WTC11 (cell line): ENCODE measurements at regions of chr19 and their contacts with region 1.

Region 1: DNA sequence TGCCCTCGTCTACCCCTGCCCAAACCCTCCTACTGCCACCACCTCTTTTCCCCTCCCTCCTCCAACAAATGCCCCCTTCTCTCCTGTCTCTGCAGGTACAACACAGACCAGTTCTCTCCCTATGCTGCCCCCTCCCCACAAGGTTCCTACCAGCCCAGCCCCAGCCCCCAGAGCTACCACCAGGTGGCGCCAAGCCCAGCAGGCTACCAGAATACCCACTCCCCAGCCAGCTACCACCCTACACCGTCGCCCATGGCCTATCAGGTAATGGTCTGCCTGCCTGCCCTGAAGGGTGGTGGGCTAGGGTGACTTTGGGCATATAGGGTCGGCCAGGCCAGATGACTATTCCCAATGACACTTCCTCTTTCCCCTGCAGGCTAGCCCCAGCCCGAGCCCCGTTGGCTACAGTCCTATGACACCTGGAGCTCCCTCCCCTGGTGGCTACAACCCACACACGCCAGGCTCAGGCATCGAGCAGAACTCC is 6.5 kb upstream of the TIMM50 start:
- DNase-seq: peak; percentile 90
- ATAC-seq: peak; percentile 90
- H3K4me3 Mint-ChIP-seq: no peak overlapping the region
- H3K27ac Mint-ChIP-seq: peak overlapping the region; percentile 56; the same call in 1 of the 2 replicates
- H3K4me1 Mint-ChIP-seq: peaks cover 3% of the 10 kb centered on the region; the same call in 1 of the 2 replicates
- H3K27me3 Mint-ChIP-seq: no peaks in the 10 kb centered on the region
- CTCF ChIP-seq: peak; percentile 93

Region 2: GRCh38 chr19:39397360-39398296 is 76.6 kb before region 1 on chr19:
- CTCF ChIA-PET with region 1: interaction called, 12 read pairs
- POLR2A ChIA-PET with region 1: no interaction called
- DNase-seq: peak; percentile 94
- ATAC-seq: peak; percentile 88
- H3K4me3 Mint-ChIP-seq: no peak overlapping the region
- H3K27ac Mint-ChIP-seq: peak overlapping the region; percentile 54
- H3K4me1 Mint-ChIP-seq: peaks cover 25% of the 10 kb centered on the region
- H3K27me3 Mint-ChIP-seq: no peaks in the 10 kb centered on the region
- CTCF ChIP-seq: peak; percentile 93

Region 3: DNA sequence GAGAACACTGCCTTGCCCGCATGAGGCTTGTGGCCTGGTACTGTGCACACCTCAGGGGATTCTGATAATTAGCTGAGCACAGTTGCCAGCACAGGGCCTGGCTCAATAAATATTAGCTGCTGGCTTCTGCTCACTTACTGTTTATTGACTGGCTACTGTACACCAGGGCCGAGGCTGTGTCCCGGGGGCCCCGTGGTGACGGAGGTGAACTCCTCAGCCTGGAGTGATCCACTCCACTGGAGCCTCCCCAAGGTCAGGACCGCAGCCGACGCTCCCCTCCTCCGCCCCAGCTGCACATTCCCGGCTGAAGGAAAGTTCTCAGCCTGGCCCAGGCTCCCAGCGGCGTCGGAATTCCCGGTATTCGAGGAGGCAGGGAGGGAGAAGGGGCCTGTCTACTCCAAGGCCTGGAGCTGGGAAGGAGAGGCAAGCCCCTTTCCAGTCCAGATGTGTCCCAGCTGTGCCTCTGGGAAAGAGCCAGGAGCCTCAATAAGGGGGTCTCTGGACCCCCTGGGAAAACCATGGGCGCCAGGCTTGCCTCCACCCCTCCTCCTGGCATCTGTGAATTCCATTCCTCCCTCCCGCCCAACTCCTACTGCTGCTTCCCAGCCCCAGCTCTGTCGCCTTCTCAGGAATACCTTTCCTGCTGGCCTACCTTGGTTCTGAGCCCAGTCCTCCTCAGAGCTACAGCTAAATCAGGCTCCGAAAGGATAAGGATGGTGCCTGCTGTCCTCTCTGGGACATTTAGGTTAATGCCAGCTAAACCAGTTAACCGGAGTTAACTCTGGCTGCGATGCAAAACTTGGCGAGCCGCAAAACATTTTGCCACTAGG is 45.7 kb before region 1 on chr19:
- CTCF ChIA-PET with region 1: interaction called, 18 read pairs
- POLR2A ChIA-PET with region 1: interaction called, 4 read pairs
- DNase-seq: peak; percentile 93
- ATAC-seq: peak; percentile 84
- H3K4me3 Mint-ChIP-seq: peak overlapping the region; percentile 57
- H3K27ac Mint-ChIP-seq: peak overlapping the region; percentile 98
- H3K4me1 Mint-ChIP-seq: peaks cover 36% of the 10 kb centered on the region
- H3K27me3 Mint-ChIP-seq: no peaks in the 10 kb centered on the region
- CTCF ChIP-seq: no peak

Region 4: DNA sequence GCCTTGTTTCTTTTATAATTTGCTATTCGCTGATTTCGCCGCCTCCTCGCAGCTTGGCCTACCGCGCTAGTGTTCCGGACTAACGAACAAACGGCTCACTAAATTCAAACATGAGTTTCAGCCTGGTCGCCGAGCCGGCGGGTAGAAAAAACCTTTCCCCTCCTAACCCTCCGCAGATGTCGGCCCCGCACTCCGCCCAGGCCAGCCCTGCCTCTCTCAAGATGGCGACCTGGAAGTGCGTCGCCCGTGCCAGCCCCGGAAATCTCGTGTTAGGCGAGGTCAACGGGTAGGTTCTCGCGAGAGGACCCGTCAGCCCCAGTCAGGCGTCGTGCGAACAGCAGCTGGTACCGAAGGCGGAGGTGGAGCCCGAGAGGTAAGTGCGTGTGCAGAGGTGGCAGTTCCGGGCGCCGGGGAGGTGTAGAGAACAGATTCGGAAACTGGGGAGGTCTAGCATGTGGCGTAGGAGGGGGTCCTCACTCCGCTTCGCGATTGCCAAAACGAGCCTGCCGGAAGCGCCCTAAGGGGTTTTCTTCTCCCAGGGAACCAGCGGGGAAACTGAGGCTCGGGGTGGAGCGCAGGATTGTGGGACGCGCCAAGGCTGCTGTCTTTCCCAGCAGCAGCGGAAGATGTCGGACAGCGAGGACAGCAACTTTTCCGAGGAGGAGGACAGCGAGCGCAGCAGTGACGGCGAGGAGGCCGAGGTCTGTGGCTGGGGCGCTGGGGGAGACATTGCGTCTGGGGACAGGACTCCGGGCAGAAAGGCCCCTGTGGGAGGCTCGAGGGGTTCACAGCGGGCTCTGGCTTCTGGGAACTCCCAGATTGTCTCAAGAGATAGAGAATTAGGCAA is 28.7 kb before region 1 on chr19 and contains the start of gene SUPT5H:
- CTCF ChIA-PET with region 1: interaction called, 15 read pairs
- POLR2A ChIA-PET with region 1: interaction called, 5 read pairs
- DNase-seq: peak; percentile 97
- ATAC-seq: peak; percentile 98
- H3K4me3 Mint-ChIP-seq: peak within 1 kb of the TSS; percentile 100
- H3K27ac Mint-ChIP-seq: peak within 1 kb of the TSS; percentile 98
- H3K4me1 Mint-ChIP-seq: peaks cover 19% of the 10 kb centered on the region
- H3K27me3 Mint-ChIP-seq: 0 out of 2 replicates have a peak, but pooled peaks cover 2% of the 10 kb centered on the region
- CTCF ChIP-seq: no peak
- total RNA-seq, gene SUPT5H: 109 to 135 TPM (median 110 TPM) in 3 replicates

Region 5: DNA sequence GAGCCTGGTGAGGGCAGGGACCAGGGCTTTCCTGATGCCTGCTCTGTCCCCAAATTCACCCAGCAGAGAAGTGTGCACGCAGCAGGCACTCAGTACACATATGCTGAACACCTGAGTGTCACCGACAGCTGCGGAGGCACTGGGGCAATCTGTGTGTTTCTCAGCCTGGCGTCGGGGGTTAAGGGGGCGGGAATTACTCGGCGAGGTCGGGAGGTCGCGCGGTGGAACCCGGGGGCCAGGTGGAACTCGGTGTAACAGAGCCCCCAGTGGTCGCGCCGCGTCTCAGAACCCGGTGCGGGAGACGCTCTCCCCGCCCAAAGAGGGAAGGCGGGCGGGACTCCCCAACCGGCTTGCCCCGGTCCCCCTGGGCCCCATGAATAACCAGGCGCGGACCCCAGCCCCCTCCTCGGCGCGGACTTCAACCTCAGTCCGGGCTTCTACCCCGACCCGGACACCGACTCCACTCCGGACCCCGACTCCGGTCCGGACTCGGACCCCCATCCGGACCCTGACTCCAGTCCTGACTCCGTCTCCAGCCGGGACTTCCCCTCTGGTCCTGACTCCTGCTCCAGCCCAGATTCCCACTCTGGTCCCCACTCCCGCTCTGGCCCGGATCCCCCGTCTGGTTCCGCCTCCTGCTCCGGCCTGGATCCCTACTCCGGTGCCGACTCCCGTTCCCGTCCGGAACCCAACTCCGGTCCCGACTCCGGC is 40.8 kb after region 1 on chr19 and contains the start of gene SELENOV:
- CTCF ChIA-PET with region 1: interaction called, 24 read pairs
- POLR2A ChIA-PET with region 1: no interaction called
- DNase-seq: peak; percentile 90
- ATAC-seq: peak; percentile 76
- H3K4me3 Mint-ChIP-seq: peak within 1 kb of the TSS; percentile 89
- H3K27ac Mint-ChIP-seq: peak within 1 kb of the TSS; percentile 41; the same call in 1 of the 2 replicates
- H3K4me1 Mint-ChIP-seq: peaks cover 27% of the 10 kb centered on the region
- H3K27me3 Mint-ChIP-seq: peaks cover 36% of the 10 kb centered on the region
- CTCF ChIP-seq: no peak
- total RNA-seq, gene SELENOV: 12.6 to 15.4 TPM (median 15.1 TPM) in 3 replicates

Region 6: DNA sequence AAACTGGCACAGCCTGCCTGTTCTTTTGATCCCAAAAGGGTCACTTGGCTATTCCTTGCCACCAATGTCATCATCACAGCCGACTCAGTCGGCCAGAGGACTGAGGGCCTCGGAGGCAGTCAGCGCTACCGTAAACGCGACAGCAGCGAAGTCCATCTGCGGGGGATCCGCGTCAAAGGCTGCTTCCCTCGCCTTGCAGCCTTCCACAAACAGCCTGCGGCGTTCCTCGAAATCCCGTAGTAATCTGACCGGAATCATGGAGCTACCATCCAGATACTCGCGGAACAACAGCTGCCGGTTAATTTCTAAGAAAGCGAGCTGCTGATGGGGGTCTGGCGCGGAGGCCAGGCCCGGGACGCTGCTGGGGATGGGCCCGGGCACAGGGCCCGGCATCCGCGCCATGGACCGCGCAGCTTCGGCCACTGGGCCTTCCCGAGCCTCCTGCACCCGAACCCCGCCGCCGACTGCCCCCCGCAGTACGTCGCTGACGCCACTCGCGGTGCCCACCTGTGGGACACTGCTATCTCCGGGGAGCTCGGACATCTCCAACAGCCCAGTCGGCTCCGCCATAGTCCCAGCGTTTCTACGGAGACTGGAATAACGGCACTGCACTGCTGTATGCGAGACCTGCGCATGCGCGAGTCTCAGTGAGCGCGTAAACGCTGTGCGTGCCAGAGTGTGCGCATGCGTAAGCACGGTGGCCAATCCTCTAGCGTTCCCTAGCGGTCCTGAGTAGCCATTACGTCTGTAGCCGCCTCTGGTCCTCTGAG is 58.2 kb after region 1 on chr19 and contains the start of gene EID2B:
- CTCF ChIA-PET with region 1: interaction called, 66 read pairs
- POLR2A ChIA-PET with region 1: interaction called, 4 read pairs
- DNase-seq: peak; percentile 95
- ATAC-seq: peak; percentile 94
- H3K4me3 Mint-ChIP-seq: peak within 1 kb of the TSS; percentile 91
- H3K27ac Mint-ChIP-seq: no peak within 1 kb of the TSS
- H3K4me1 Mint-ChIP-seq: peaks cover 6% of the 10 kb centered on the region
- H3K27me3 Mint-ChIP-seq: peaks cover 10% of the 10 kb centered on the region
- CTCF ChIP-seq: peak; percentile 95
- total RNA-seq, gene EID2B: 2.7 to 3.6 TPM (median 2.7 TPM) in 3 replicates

Region 7: GRCh38 chr19:39582891-39583625 is 108.9 kb after region 1 on chr19:
- CTCF ChIA-PET with region 1: no interaction called
- POLR2A ChIA-PET with region 1: no interaction called
- DNase-seq: no peak
- ATAC-seq: no peak
- H3K4me3 Mint-ChIP-seq: no peak overlapping the region
- H3K27ac Mint-ChIP-seq: no peak overlapping the region
- H3K4me1 Mint-ChIP-seq: no peaks in the 10 kb centered on the region
- H3K27me3 Mint-ChIP-seq: peaks cover 30% of the 10 kb centered on the region
- CTCF ChIP-seq: no peak

Region 8: GRCh38 chr19:39671738-39672363 is 197.7 kb after region 1 on chr19:
- CTCF ChIA-PET with region 1: interaction called, 12 read pairs
- POLR2A ChIA-PET with region 1: no interaction called
- DNase-seq: peak; percentile 26
- ATAC-seq: peak; percentile 81
- H3K4me3 Mint-ChIP-seq: peak overlapping the region; percentile 24; the same call in 1 of the 2 replicates
- H3K27ac Mint-ChIP-seq: no peak overlapping the region
- H3K4me1 Mint-ChIP-seq: peaks cover 16% of the 10 kb centered on the region
- H3K27me3 Mint-ChIP-seq: peaks cover 13% of the 10 kb centered on the region; the same call in 1 of the 2 replicates
- CTCF ChIP-seq: peak; percentile 39; the same call in 1 of the 2 replicates